ENCODE measurements at regions of chr9 and their contacts with region 1.

Region 1: DNA sequence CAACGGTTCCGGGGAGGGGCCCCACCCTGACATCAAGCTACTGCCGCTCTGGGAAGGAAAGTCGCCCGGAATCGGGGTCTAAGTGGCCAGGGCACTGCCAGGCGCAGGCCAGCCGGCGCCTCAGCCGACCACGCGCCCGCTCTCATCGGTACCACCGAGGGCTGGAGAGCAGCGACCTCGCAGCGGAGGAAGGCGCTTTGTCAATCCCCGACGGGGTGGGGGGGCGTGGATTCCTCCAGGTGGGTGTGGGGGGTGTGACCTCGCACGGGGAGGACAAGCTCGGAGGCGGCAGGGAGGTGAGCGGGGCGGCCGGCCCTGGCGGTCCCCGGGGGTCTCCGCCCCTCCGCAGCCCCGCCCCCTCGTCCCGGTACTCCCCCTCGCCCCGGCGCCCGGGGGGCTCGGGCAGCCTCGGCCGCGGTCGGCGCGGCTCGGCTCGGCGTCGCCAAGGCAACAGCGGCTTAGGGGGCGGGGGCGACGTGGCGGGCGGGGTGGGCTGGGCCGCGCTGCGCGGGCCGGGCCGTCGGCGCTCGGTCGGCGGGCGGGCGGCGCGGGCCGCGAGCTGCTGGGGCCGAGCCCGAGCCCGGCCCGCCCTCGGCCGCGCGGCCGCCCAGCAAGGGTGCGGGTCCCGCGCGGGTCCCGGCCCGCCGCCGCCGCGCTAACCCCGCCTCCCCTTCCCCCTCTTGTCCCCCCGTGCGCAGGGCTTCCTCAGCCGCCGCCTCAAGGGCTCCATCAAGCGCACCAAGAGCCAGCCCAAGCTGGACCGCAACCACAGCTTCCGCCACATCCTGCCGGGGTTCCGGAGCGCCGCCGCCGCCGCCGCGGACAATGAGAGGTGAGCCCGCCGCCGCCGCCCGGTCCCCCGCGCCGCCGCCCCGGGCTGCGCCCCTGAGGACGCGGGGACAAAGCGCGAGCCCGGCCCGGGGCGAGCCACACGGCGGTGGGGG is 47.5 kb downstream of the DAB2IP start:
- DNase-seq: peak; percentile 83

Region 2: GRCh38 chr9:121598965-121599871 is 99.7 kb before region 1 on chr9:
- intact Hi-C with region 1: no loop called
- DNase-seq: peak; percentile 88

Region 3: DNA sequence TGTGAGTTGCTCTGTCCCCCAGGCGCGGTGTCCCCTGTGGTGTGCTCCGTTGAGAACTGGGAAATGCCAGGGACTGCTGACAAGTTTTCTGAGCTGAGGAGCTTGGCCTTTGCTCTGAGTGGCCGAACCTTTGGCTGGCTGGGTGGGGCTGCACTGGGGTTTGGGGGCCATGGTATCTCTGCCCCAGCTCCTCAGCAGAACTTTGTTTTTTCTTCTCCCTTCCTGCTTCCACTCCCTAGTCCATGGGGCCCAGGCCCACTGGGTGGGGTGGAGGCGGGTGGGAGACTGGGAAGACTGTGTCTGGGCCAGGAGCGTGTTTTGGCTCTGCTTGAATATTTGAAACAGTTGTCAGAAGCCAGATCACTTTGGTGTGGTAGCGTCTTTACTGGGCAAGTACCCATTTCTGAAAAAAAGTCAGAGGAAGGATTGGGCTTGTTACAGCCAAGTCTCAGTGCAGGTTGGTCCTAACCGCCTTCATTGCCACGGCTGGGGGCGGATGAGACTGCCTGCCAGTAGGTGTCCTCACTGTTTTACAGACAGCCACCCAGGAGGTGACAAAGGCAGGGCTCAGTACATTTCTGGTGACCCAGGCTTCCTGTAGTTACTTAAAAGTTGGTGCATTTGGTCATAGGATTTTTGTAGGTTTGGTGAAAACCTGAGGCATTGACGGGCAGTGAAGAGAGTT is 45.2 kb after region 1 on chr9:
- intact Hi-C with region 1: loop called (anchors 5 kb)
- DNase-seq: no peak

Region 4: GRCh38 chr9:121839726-121840500 is 141.0 kb after region 1 on chr9:
- intact Hi-C with region 1: no loop called
- DNase-seq: peak; percentile 3

Measured in cardiac septum (tissue), 1 donor.